ENCODE measurements at regions of chr18 and their contacts with region 1.

Region 1: DNA sequence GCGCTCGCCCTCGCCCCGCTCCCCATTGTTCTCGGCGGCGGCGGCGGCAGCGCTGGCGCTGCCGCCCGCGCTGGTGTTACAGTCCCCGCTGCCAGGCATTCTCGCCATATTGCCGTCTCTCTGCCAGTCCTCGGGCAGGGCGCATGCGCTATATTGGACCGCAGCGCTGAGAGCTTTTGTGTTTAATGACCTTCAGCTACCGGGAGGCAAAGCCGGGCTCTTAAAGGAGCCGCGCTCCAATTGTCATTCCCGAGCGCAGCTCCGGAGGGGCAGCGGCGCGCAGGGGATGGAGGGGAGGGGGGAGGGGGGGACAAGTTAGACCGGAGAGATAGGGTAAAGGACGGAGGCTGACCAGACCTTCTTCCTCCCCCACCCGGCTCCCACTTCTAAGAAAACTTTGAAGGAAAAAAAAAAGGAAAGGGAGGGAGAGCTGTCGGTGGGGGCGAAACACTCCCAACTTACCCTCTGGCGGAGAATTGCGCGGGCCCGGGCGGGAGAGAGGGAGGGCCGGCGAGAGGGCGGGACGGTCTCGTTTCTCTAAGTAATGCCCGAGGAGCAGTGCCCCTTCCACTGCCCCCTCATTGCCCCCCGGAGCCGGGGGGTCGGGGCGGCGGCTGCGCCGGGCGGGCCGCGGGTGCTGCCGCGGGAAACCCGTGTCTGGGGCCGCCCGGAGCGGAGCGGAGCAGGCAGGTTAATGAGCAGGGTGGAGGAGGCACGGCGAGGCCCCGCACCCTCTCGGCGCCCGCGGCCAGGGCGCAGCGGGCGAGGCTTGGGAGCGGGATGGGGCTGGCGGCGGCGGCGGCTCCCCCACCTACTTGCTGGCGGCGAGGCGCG is at the start of gene KCTD1:
- DNase-seq: peak; percentile 89
- H3K4me3 ChIP-seq: peak within 1 kb of the TSS; percentile 83
- H3K27ac ChIP-seq: no peak within 1 kb of the TSS
- H3K4me1 ChIP-seq: peaks cover 40% of the 10 kb centered on the region
- CTCF ChIP-seq: no peak
- total RNA-seq, gene KCTD1: 9.1 and 10.3 TPM in 2 replicates

Region 2: GRCh38 chr18:26405190-26405801 is 143.3 kb before region 1 on chr18:
- CTCF ChIA-PET with region 1: no interaction called
- POLR2A ChIA-PET with region 1: interaction called, 3 read pairs
- intact Hi-C with region 1: loop called (anchors 2 kb)
- DNase-seq: peak; percentile 61
- H3K4me3 ChIP-seq: no peak overlapping the region
- H3K27ac ChIP-seq: no peak overlapping the region
- H3K4me1 ChIP-seq: no peaks in the 10 kb centered on the region
- CTCF ChIP-seq: peak; percentile 69

Region 3: DNA sequence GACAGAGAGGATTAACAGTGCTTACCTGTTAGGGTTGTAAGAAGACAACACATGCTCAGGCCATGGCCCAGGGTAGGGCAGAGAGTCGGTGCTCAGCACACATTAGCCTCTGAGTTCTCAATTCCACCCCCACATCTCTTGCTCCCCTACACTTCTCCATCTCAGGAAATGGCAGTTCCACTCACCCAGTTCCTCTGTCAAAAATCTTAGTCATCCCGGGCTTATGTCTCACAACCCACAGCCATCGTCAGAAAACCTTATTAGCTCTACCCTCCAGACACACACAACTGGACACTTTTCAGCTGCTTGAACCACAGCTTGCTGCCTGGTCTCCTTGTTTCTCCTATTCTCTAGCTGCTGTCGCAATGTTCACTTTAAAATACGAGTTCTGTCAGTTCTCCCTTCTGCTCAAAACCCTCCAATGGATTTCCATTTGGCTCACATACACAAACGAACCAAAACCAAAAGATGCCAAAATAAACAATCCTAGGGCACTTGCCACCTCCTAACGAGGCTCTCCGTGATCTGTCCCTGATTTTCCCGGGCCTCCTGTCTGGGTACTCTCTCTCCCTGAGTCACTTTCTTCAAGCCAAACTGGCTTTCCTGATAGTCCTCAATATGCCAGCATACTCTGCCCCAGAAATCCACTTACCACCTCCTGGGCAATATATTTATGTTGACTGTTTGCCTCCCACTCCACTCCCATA is 90.0 kb before region 1 on chr18:
- CTCF ChIA-PET with region 1: interaction called, 3 read pairs
- POLR2A ChIA-PET with region 1: interaction called, 4 read pairs
- intact Hi-C with region 1: loop called (anchors 5 kb)
- DNase-seq: no peak
- H3K4me3 ChIP-seq: no peak overlapping the region
- H3K27ac ChIP-seq: no peak overlapping the region
- H3K4me1 ChIP-seq: peaks cover 65% of the 10 kb centered on the region
- CTCF ChIP-seq: no peak

Region 4: DNA sequence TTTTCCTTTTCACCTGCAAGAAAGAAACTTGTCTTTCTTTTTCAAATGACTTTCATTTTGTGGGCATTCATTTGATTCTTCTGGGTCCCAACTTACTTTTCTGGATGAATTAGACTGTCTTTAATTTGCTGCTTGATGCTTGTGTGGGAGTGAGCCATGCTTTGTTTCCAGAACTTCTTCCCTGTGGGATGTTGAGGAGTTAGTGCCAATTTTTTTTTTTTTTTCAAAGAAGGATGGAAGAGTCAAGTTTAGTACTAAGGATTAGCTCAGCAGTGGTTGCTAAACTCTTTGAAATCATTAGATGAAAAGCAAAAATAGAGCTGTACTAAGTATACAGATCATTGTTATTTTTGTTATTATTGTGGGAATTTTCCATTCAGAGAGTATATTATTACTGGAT is 16.9 kb after region 1 on chr18:
- CTCF ChIA-PET with region 1: no interaction called
- POLR2A ChIA-PET with region 1: no interaction called
- intact Hi-C with region 1: no loop called
- DNase-seq: no peak
- H3K4me3 ChIP-seq: no peak overlapping the region
- H3K27ac ChIP-seq: no peak overlapping the region
- H3K4me1 ChIP-seq: no peaks in the 10 kb centered on the region
- CTCF ChIP-seq: no peak

Region 5: DNA sequence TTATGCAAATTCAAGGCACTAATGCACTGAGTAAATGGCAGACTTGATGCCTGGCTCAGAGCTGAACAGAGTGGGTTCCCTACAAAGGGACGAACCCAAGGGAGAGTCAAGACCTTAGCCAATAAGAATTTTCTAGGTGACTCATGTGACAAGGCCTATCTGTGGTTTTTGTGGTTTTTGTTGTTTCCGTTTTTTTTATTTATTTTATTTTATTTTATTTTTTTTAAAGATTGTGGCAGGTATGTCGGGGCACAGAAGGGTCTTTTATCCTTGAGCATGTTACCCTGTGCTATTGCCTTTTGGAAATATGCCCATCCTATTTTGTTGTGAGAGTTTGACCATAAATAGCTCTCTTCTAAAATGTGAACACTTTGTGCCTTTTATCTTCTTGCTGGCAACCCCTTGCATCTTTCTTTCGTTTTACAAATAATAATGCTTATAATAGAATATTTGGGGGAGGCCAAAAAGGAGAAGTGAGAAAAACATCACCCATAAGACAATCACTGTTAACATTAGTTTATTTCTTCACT is 430.2 kb after region 1 on chr18:
- CTCF ChIA-PET with region 1: no interaction called
- POLR2A ChIA-PET with region 1: no interaction called
- intact Hi-C with region 1: loop called (anchors 10 kb)
- DNase-seq: peak; percentile 77
- H3K4me3 ChIP-seq: peak overlapping the region; percentile 47
- H3K27ac ChIP-seq: peak overlapping the region; percentile 76
- H3K4me1 ChIP-seq: peaks cover 37% of the 10 kb centered on the region
- CTCF ChIP-seq: no peak

Measured in OCI-LY7 (cell line).